ENCODE measurements at regions of chr7 and their contacts with region 1.

Region 1: GRCh38 chr7:1889556-1890181 is 219.6 kb downstream of the ELFN1 start:
- DNase-seq: no peak
- H3K4me3 ChIP-seq: no peak overlapping the region
- H3K27ac ChIP-seq: no peak overlapping the region
- H3K4me1 ChIP-seq: peaks cover 22% of the 10 kb centered on the region
- H3K27me3 ChIP-seq: no peaks in the 10 kb centered on the region
- CTCF ChIP-seq: no peak

Region 2: DNA sequence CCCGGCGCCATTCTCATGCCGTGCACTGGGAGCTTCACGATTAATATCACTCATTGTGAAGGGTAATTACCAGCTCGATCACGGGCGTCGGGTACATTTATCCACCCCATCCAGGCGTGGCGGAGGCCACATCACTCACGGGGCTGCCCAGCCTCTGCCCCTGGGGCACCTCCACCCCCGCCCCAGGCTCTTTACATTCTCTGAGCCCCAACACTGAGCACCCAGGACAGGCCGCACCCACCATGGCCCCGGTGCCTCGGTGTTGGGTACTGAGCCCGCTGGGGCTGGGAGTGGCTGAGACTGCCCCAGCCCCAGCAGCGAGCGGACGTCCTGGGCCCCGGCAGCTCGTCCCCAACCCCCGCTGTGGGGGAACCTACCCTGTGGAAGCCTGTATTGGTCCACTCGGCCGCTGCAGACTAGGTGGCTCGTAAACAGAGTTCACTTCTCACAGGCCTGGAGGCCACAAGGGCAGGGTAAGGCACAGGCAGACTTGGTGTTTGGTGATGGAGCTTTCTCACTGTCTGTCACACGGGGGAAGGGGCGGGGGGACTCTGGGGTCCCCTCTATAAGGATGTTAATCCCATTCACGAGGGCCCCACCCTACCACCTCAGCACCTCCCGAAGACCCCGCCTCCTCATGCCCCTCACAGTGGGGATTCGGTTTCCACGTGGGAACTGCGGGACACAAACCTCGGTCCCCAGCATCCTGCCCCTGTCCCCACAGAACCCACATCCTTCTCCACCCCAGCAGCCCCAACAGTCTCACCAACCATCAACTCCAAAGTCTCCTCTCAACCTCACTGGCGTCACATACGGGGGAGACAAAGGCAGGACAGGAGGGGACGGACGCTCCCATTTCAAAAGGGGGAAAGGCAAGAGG is 35.4 kb before region 1 on chr7:
- CTCF ChIA-PET with region 1: no interaction called
- dilution Hi-C with region 1: loop called (anchors 5 kb)
- in situ Hi-C with region 1: no loop called
- intact Hi-C with region 1: no loop called
- DNase-seq: no peak
- H3K4me3 ChIP-seq: no peak overlapping the region
- H3K27ac ChIP-seq: no peak overlapping the region
- H3K4me1 ChIP-seq: no peaks in the 10 kb centered on the region
- H3K27me3 ChIP-seq: no peaks in the 10 kb centered on the region
- CTCF ChIP-seq: no peak

Region 3: DNA sequence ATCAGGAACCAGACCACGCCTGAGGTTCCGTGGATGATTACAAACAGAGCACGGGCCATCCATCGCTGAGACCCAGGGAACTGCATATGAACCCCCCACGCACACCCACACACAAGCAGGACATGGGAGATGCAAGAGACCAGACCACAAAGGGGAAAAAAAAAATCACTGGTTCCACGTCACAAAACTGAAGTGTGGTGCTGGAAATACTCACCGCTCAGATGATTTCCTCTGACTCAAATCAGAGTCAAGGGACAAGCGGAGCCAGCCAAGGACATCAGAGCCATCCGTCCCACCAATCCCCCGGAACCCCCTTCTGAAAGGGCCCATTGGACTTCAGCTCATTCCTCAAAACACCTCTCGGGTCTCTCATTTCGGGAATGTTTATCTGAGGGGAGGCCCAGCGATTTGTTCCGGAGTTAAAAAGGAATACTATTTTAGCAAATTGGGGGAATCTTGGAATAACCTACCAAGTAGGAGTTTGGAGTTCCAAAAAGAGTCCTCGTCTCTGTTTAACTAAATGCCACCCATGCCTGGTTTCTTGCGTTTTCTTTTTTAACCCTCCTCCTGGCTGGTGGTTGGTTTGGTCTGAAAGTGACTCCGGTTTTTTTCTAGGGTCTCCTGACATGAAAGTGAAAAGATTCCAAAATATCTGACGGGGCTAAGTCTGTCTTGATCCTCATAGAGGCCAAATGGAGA is 409.6 kb after region 1 on chr7:
- CTCF ChIA-PET with region 1: no interaction called
- dilution Hi-C with region 1: no loop called
- in situ Hi-C with region 1: no loop called
- intact Hi-C with region 1: no loop called
- DNase-seq: no peak
- H3K4me3 ChIP-seq: no peak overlapping the region
- H3K27ac ChIP-seq: no peak overlapping the region
- H3K4me1 ChIP-seq: no peaks in the 10 kb centered on the region
- H3K27me3 ChIP-seq: no peaks in the 10 kb centered on the region
- CTCF ChIP-seq: no peak

Measured in mammary epithelial cell (primary cell).